Mammary epithelial cell (primary cell): ENCODE measurements at regions of chr1 and their contacts with region 1.

Region 1: GRCh38 chr1:80349218-80349617 is 1342.7 kb upstream of the ADGRL4 start:
- DNase-seq: no peak
- H3K4me3 ChIP-seq: no peak overlapping the region
- H3K27ac ChIP-seq: no peak overlapping the region
- H3K4me1 ChIP-seq: no peaks in the 10 kb centered on the region
- H3K27me3 ChIP-seq: no peaks in the 10 kb centered on the region
- CTCF ChIP-seq: no peak

Region 2: GRCh38 chr1:78911956-78912880 is 1437.0 kb before region 1 on chr1:
- CTCF ChIA-PET with region 1: interaction called, 27 read pairs
- dilution Hi-C with region 1: no loop called
- in situ Hi-C with region 1: no loop called
- intact Hi-C with region 1: no loop called
- DNase-seq: no peak
- H3K4me3 ChIP-seq: no peak overlapping the region
- H3K27ac ChIP-seq: no peak overlapping the region
- H3K4me1 ChIP-seq: no peaks in the 10 kb centered on the region
- H3K27me3 ChIP-seq: no peaks in the 10 kb centered on the region
- CTCF ChIP-seq: no peak